ENCODE measurements at regions of chr5 and their contacts with region 1.

Region 1: DNA sequence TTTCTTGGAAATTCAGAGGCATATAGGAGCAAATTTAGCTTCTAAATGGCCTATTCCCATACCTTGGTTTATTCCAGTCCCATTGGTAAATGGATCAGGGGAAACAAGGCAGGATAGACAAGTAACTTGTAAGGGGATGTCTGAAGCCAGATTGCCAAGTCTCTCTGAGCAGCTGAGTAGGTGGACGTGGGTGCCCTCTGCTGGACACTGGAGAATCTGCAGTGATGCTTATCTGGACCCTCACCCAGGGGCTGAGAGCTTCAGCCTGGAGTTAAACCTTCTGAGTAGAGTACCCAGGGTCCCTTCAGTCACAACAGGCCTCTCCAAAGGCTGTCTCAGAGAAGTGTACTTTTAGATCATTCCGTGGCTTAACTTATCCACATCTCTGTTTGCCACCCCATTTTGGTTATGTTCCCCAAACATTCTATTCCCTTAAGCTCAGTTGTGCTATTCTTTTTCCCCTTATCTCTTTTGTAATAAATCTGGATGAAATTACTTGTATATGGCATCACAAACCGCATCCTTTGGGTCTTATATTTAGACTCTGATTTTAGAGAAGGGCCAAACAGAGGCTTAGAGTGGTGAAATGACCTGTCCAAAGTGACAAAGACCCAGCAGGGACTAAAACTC is 218.3 kb upstream of the GLRA1 start:
- DNase-seq: peak in 2 of 3 donors; percentile 51 to 52
- ATAC-seq: peak; percentile 60
- H3K4me3 ChIP-seq: no peak overlapping the region
- H3K4me1 ChIP-seq: no peaks in the 10 kb centered on the region
- CTCF ChIP-seq: peak; percentile 75

Region 2: GRCh38 chr5:151825445-151825844 is 317.5 kb before region 1 on chr5:
- intact Hi-C with region 1: loop called (anchors 2 to 10 kb)
- DNase-seq: peak in 2 of 3 donors; percentile 30 to 76
- ATAC-seq: peak; percentile 89
- H3K4me3 ChIP-seq: no peak overlapping the region
- H3K4me1 ChIP-seq: no peaks in the 10 kb centered on the region
- CTCF ChIP-seq: peak; percentile 34

Region 3: GRCh38 chr5:152092580-152092979 is 50.4 kb before region 1 on chr5:
- intact Hi-C with region 1: no loop called
- DNase-seq: no peak
- ATAC-seq: no peak
- H3K4me3 ChIP-seq: no peak overlapping the region
- H3K4me1 ChIP-seq: no peaks in the 10 kb centered on the region
- CTCF ChIP-seq: no peak